Breast epithelium (tissue), 4 donors: ENCODE measurements at regions of chr11 and their contacts with region 1.

Region 1: DNA sequence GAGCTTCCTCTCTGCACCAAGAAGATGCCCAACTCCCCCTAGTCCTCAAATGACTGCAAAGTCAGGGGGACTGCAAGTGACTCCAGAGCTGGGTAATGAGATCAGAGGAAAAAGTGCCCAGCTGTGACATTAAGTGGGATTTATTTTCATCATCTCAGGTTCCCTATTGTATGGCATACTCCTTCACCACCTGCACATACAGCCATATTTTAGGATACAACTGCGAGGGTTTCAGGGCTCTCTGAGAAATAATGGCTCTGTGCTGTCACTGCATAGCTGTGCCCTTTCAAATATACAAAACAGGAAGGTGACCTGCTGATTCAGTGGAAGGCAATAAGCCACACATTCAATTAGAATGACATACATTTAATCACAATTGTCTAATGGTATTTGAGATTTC is 45.6 kb upstream of the PLET1 start:
- DNase-seq: no peak
- H3K4me3 ChIP-seq: no peak overlapping the region
- H3K27ac ChIP-seq: no peak overlapping the region
- H3K4me1 ChIP-seq: no peaks in the 10 kb centered on the region
- H3K27me3 ChIP-seq: no peaks in the 10 kb centered on the region
- CTCF ChIP-seq: no peak
- POLR2A ChIP-seq: no peak

Region 2: DNA sequence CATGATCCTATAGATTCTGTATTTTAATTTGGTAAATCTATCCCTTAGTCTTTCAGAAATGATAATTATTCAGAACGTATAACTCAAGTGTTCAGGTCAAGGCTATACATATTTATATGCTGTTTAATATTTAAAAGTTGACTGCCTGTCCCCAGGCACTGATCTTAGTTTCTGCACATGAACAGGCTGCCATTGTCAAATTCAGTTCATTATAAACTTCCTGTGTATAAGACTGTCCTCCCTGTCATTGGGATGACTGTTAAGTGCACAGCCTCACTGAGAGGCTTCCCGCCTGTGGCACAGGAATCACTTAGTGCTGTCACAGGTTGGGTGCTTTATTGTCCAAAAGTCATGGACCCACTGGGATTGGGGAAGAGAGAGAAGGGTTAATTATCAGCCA is 916.0 kb after region 1 on chr11:
- intact Hi-C with region 1: loop called (anchors 5 kb)
- DNase-seq: no peak
- H3K4me3 ChIP-seq: no peak overlapping the region
- H3K27ac ChIP-seq: no peak overlapping the region
- H3K4me1 ChIP-seq: no peaks in the 10 kb centered on the region
- H3K27me3 ChIP-seq: no peaks in the 10 kb centered on the region
- CTCF ChIP-seq: no peak
- POLR2A ChIP-seq: no peak